ENCODE measurements at regions of chr2 and their contacts with region 1.

Region 1: DNA sequence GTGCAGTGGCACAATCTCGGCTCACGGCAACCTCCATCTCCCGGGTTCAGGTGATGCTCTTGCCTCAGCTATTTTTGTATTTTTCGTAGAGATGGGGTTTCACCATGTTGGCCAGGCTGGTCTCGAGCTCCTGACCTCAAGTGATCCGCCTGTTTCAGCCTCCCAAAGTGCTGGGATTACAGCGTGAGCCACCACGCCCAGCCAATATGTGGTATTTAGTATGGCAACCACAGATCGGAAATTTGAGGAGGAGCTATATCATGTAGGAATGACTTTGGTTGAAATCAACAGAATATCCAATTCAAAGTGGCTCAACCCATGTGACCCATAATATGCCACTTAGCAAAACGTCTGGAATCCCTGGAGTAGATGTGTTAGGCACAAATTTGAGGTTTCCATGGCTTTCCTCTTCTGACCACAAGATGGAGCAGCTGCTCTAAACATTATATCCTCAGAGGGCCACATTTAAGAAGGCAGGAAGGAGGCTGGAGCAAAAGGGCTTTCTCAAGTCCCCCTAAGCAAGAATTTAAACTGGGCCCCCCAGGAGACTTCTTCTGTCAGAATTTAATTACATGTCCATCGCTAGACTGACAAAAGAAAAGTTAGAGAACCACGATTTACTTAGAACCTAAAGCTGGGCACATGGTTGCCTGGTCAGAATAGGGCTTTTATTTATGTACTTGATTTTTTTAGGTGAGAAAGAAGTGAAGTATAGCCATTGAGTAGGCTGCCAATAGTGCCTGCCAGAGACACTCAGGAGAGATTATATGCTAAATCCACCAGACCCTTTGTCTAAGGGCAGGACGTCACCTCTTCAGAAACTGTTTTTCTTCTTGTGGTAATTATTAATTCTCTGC is 49.6 kb upstream of the ITSN2 start:
- DNase-seq: peak; percentile 24
- H3K4me3 ChIP-seq: no peak overlapping the region
- H3K27ac ChIP-seq: no peak overlapping the region
- H3K4me1 ChIP-seq: peaks cover 0 to 5% (median 0%) of the 10 kb centered on the region in 4 donors
- H3K27me3 ChIP-seq: no peaks in the 10 kb centered on the region
- CTCF ChIP-seq: peak; percentile 77 to 85 (median 83)
- EP300 ChIP-seq: no peak
- POLR2A ChIP-seq: no peak

Region 2: DNA sequence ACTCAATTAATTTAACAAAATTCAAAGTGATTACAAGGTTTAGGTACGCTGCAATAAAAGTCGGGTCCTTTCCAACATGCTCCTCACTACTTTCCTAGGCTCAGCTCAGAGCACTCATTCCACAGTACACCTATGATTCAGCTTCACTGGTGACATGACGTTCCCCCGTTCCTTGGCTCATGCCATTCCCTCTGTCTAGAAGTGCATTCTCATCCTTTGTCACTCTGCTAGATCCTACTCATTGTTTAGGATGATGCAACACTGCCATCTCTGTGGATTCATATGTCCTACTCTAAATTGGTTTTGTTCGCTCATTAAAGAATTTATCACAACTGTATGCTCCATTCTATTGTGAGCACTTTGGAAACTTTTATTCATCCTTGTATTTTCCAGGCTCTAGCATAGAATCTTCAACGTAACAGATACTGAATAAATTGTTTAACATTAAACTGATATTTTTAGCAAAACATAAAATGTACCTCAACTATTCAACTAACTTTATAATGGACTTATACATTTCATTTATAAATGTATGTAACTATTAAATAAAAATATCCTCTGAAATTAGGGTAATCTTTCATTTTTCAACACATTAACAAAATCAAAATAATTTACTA is 156.5 kb before region 1 on chr2:
- in situ Hi-C with region 1: no loop called
- intact Hi-C with region 1: no loop called
- DNase-seq: no peak
- H3K4me3 ChIP-seq: no peak overlapping the region
- H3K27ac ChIP-seq: no peak overlapping the region
- H3K4me1 ChIP-seq: no peaks in the 10 kb centered on the region
- H3K27me3 ChIP-seq: no peaks in the 10 kb centered on the region
- CTCF ChIP-seq: no peak
- EP300 ChIP-seq: no peak
- POLR2A ChIP-seq: no peak

Region 3: GRCh38 chr2:24521975-24522639 is 112.2 kb after region 1 on chr2:
- in situ Hi-C with region 1: no loop called
- intact Hi-C with region 1: no loop called
- DNase-seq: no peak
- H3K4me3 ChIP-seq: no peak overlapping the region
- H3K27ac ChIP-seq: no peak overlapping the region
- H3K4me1 ChIP-seq: peaks cover 0 to 28% (median 12%) of the 10 kb centered on the region in 4 donors
- H3K27me3 ChIP-seq: no peaks in the 10 kb centered on the region
- CTCF ChIP-seq: no peak
- EP300 ChIP-seq: no peak
- POLR2A ChIP-seq: no peak

Region 4: GRCh38 chr2:24827321-24828237 is 417.7 kb after region 1 on chr2:
- in situ Hi-C with region 1: loop called (anchors 5 to 10 kb)
- intact Hi-C with region 1: loop called (anchors 2 kb)
- DNase-seq: peak; percentile 84
- H3K4me3 ChIP-seq: no peak overlapping the region
- H3K27ac ChIP-seq: peak overlapping the region in 1 of 4 donors; percentile 2
- H3K4me1 ChIP-seq: peaks cover 3 to 5% (median 5%) of the 10 kb centered on the region in 4 donors
- H3K27me3 ChIP-seq: no peaks in the 10 kb centered on the region
- CTCF ChIP-seq: peak; percentile 81 to 91 (median 89)
- EP300 ChIP-seq: no peak
- POLR2A ChIP-seq: no peak

Measured in transverse colon (tissue), 4 donors.